ENCODE measurements at regions of chr12 and their contacts with region 1.

Region 1: DNA sequence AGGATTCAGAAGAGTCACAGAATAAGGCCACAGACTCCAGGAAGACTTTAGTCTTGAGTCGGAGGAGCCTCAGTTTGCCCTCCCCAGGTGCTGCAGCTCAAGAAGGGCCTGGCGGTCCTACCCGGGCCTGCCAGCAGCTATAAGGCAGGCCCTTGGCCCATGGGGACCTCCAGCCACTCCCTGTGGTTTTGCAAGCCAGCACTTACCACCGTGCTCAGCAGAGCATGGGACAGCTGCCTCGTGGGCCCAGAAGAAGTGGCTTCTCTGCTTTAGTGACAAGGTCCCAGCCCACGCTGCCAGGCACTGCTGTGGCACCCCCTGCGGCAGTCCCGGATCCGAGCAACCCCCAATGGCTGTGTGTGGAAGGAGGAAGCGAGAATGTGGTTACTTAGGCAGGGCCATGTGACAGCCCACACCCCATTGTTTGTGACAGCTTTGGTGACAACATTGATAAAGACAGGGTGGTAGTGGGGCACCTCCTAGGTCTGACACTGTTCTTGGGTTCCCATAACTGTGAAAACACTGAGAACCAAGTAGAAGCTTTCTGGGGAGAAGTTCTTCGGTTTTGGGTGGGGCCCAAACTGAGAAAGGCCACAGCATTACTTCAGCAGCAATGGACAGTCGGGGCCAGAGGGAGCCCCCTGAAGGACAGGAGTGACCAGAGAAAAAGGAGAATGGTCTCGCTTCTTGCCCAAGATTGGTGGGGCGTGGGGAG is at the start of gene SELPLG:
- DNase-seq: peak; percentile 93
- H3K4me3 Mint-ChIP-seq: peak within 1 kb of the TSS; percentile 99
- H3K27ac Mint-ChIP-seq: peak within 1 kb of the TSS; percentile 100
- H3K4me1 Mint-ChIP-seq: peaks cover 55% of the 10 kb centered on the region
- H3K27me3 Mint-ChIP-seq: no peaks in the 10 kb centered on the region
- total RNA-seq, gene SELPLG: 289 to 301 TPM

Region 2: DNA sequence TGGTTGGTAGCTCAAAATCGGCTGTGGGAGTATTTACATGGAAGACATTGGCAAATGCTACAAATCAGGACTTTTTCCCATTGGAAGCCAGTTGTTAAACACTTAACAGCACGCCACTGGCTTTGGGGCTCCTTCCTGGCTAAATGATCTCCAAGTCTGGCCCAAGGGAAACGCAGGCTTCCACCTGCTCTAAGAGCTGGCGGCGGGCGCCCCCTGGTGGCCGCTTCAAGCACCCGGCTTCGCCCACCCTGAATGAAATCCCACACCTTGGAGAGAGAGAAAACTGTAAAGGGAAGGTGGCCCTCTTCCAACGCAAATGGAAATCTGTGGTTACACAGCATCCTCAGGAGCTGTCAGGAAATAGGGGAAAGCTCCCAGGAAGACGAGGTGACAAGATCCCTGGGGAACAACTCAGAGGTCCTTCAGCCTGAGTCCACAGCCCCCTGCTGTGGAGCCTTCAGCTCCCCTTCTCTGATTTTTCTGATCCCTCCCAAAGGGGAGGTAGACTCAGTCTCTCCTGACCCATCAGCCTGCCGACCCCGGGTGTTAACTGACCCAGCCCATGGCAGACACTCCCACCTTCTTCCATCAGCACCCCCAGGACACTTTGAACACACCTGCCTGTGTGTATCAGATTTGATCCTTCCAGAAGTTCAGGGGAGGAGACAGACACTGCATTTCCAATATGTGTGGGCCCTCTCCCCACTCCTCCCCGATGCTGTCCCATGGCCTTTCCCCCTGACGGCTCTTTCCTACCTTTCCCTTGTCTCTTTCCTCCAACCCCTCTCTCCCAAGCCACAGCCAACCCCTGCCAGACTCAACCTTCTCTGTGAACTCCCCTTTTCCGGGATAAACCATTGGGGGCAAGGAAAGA is 15.4 kb before region 1 on chr12:
- CTCF ChIA-PET with region 1: interaction called, 215 read pairs
- POLR2A ChIA-PET with region 1: interaction called, 213 read pairs
- DNase-seq: peak; percentile 75
- H3K4me3 Mint-ChIP-seq: no peak overlapping the region
- H3K27ac Mint-ChIP-seq: peak overlapping the region; percentile 68
- H3K4me1 Mint-ChIP-seq: peaks cover 79% of the 10 kb centered on the region
- H3K27me3 Mint-ChIP-seq: no peaks in the 10 kb centered on the region

Region 3: GRCh38 chr12:108691175-108691997 is 57.7 kb after region 1 on chr12:
- CTCF ChIA-PET with region 1: interaction called, 7 read pairs
- POLR2A ChIA-PET with region 1: interaction called, 46 read pairs
- DNase-seq: peak; percentile 83
- H3K4me3 Mint-ChIP-seq: peak overlapping the region; percentile 66
- H3K27ac Mint-ChIP-seq: peak overlapping the region; percentile 89
- H3K4me1 Mint-ChIP-seq: peaks cover 66% of the 10 kb centered on the region
- H3K27me3 Mint-ChIP-seq: no peaks in the 10 kb centered on the region

Region 4: DNA sequence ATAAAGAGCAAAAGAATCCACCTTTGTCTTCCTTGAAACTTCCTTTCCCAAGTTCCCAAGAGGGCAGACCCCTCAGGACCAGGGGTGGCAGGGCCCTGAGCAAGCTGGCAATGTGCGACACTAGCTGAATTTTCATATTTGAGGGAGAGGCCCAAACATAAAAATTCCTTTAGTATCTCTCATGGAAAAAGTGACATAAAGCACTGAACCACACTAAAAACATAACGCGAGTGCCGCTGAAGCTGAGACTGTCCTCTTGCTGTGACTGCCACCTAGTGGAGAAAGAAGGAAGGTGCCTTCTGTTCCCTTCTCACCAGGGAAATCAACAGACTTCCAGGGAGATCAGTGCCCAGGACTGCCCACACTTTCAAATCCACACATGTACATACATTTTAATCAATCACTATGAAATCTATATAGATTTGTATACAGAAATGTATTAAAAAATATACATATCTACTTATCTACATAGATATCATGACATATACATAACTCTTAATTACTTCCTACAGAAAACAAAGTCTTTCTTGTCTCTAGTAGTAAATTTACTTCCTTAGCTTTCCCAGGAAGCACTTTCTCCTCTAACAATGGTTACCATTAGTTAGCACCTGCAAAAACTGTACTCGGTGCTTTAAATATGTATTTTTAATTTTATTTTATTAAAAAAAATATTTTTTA is 169.9 kb after region 1 on chr12:
- CTCF ChIA-PET with region 1: interaction called, 5 read pairs
- POLR2A ChIA-PET with region 1: interaction called, 10 read pairs
- DNase-seq: peak; percentile 70
- H3K4me3 Mint-ChIP-seq: no peak overlapping the region
- H3K27ac Mint-ChIP-seq: peak overlapping the region; percentile 41
- H3K4me1 Mint-ChIP-seq: peaks cover 10% of the 10 kb centered on the region
- H3K27me3 Mint-ChIP-seq: no peaks in the 10 kb centered on the region

Region 5: GRCh38 chr12:108838194-108839017 is 204.7 kb after region 1 on chr12:
- CTCF ChIA-PET with region 1: no interaction called
- POLR2A ChIA-PET with region 1: interaction called, 40 read pairs
- DNase-seq: peak; percentile 90
- H3K4me3 Mint-ChIP-seq: peak overlapping the region; percentile 35
- H3K27ac Mint-ChIP-seq: peak overlapping the region; percentile 81
- H3K4me1 Mint-ChIP-seq: peaks cover 70% of the 10 kb centered on the region
- H3K27me3 Mint-ChIP-seq: no peaks in the 10 kb centered on the region

Measured in activated CD4-positive, alpha-beta memory T cell treated with anti-CD3 and anti-CD28 coated beads, Interleukin-2, amount 10 ng/mL, durations not matched to agents 7 days and 5 days (primary cell).